GM12878 (cell line): ENCODE measurements at regions of chr16 and their contacts with region 1.

Region 1: DNA sequence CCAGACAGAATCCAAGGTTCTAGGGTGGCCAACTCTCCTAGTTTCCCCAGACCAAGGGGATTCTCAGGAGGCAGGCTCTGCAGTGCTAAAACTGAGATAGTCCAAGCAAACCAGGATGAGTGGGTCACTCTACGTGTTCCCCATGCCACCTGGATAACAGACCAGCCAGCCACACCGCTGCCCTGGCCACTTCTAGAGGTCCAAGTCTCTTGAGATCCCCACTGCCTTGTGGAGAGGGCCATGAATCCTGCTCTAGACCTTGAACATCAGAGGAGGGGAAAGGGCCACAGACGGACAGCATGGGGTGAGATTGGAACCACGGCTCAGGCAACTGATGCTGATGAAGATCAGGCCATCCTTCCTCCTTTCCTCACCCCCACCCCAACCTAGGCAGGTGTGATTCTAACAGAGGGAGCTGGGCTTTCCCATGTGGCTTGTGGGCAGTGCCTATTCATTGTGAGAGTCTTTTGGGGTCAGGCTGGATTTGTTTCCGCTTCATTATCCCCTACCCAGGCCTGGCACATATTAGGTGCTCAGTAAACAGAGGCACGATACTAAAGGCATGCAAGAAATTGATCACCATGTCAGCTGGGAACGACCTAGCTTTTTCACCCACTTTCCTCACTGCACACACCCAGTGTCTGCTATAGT is 16.8 kb upstream of the TVP23A start:
- DNase-seq: peak; percentile 84
- ATAC-seq: peak; percentile 76
- H3K4me3 ChIP-seq: no peak overlapping the region
- H3K27ac ChIP-seq: peak overlapping the region; percentile 33
- H3K4me1 ChIP-seq: peaks cover 49% of the 10 kb centered on the region
- H3K27me3 ChIP-seq: no peaks in the 10 kb centered on the region
- CTCF ChIP-seq: no peak
- EP300 ChIP-seq: peak; percentile 86 to 89
- POLR2A ChIP-seq: no peak
- RAD21 ChIP-seq: no peak; the same call in 1 of the 2 replicates

Region 2: DNA sequence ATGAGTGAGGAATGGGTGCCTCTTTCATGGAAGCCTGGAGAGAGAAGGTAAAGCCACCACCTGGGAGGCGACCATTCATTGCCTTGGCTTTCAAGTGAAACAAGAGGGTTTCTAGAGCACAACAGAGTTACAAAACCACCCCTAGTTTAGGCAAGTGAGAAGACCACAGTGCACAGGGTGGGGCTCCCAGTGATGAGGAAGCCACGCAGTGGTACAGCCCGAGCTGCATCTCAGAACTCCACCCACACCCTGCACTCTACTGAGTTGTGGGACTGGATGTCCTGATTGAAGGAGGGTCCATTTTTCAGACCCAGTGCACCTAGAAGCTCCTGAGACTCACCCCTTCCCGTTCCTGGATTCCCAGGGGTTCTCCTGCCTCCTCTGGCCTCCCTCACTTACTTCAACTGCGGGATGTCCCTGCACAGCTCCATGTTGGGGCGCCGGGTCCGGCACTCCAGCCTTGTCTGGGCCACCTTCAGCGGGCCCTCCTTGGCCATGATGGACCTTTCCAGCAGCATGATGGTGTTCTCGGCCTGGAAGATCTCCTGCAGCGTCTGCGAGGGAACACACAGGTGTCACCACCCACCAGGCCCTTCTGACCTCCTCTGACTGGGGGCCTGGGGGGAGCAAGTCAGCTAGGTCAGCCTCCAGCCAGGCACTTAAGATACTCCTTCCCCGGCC is 199.9 kb before region 1 on chr16:
- CTCF ChIA-PET with region 1: no interaction called
- POLR2A ChIA-PET with region 1: no interaction called
- RAD21 ChIA-PET with region 1: no interaction called
- SMC1A ChIA-PET with region 1: no interaction called
- in situ Hi-C with region 1: no loop called
- intact Hi-C with region 1: no loop called
- DNase-seq: no peak
- ATAC-seq: no peak
- H3K4me3 ChIP-seq: no peak overlapping the region
- H3K27ac ChIP-seq: no peak overlapping the region
- H3K4me1 ChIP-seq: no peaks in the 10 kb centered on the region
- H3K27me3 ChIP-seq: no peaks in the 10 kb centered on the region; a peak in 1 of 4 replicates
- CTCF ChIP-seq: no peak
- EP300 ChIP-seq: no peak
- POLR2A ChIP-seq: no peak
- RAD21 ChIP-seq: no peak

Region 3: DNA sequence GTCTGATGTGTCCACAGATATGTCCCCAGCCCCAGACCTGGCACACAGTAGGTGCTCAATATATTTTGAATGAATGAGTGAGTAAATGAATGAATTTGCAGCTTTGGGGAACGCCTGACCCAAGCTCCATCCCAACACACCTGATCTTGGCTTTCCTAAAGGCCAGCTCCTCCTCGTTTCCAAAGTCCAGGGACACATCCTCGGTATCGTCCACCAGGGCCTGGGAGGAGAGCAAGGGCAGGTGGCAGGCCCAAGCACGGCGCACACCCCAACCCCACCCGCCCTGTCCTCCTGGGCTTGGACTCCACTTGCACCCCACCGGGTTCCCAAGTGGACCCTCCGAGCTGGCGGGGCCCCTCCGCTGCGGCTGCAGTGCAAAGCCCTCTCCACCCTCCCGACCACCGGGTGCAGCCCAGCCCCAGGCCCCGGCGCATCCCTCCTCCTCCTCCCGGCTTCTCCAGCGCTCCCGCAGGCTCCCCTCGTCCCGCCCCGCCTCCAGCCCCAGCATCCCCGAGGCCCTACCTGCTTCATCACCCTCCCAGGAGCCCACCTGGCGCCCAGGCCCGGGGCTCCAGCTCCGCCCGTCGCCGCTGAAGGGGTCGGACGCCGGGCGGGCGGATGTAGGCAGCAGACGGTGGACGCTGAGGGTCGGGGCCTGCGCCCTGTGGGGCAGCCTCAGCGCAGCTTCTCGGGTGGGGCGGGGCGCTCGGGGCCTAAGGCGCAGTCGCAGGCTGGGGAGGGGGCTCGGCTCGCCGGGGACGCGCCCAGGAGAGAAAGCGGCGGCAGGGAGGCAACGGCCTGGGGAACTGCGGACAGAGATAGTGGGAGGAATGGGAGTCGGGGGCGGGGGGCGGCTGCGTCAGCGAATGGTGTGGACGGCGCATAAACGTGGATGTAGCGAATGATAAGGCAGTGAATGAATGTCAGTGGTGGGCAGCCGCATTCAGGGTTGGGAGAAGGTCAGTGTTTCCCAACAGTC is 17.2 kb before region 1 on chr16 and contains the start of gene TVP23A:
- CTCF ChIA-PET with region 1: interaction called, 6 read pairs
- POLR2A ChIA-PET with region 1: interaction called, 13 read pairs
- RAD21 ChIA-PET with region 1: interaction called, 39 read pairs
- SMC1A ChIA-PET with region 1: interaction called, 41 read pairs
- in situ Hi-C with region 1: no loop called
- intact Hi-C with region 1: loop called (anchors 1 kb)
- DNase-seq: no peak
- ATAC-seq: no peak
- H3K4me3 ChIP-seq: no peak within 1 kb of the TSS
- H3K27ac ChIP-seq: peak within 1 kb of the TSS; percentile 38; the same call in 1 of the 2 replicates
- H3K4me1 ChIP-seq: peaks cover 37% of the 10 kb centered on the region
- H3K27me3 ChIP-seq: no peaks in the 10 kb centered on the region
- CTCF ChIP-seq: no peak
- EP300 ChIP-seq: no peak
- POLR2A ChIP-seq: no peak
- RAD21 ChIP-seq: no peak
- polyA plus RNA-seq, gene TVP23A: 4.6 to 6.4 TPM

Region 4: GRCh38 chr16:10846213-10846998 is 11.0 kb after region 1 on chr16:
- CTCF ChIA-PET with region 1: interaction called, 3 read pairs
- POLR2A ChIA-PET with region 1: interaction called, 10 read pairs
- RAD21 ChIA-PET with region 1: interaction called, 4 read pairs
- SMC1A ChIA-PET with region 1: interaction called, 11 read pairs
- in situ Hi-C with region 1: no loop called
- intact Hi-C with region 1: no loop called
- DNase-seq: no peak
- ATAC-seq: no peak
- H3K4me3 ChIP-seq: no peak overlapping the region
- H3K27ac ChIP-seq: no peak overlapping the region
- H3K4me1 ChIP-seq: peaks cover 20% of the 10 kb centered on the region
- H3K27me3 ChIP-seq: no peaks in the 10 kb centered on the region
- CTCF ChIP-seq: no peak
- EP300 ChIP-seq: no peak
- POLR2A ChIP-seq: no peak
- RAD21 ChIP-seq: no peak